ENCODE measurements at regions of chr5 and their contacts with region 1.

Region 1: GRCh38 chr5:146965761-146966659 is 87.5 kb upstream of the PPP2R2B start:
- DNase-seq: peak; percentile 34 to 57 (median 51)
- H3K4me3 ChIP-seq: no peak overlapping the region
- H3K4me3 Mint-ChIP-seq: no peak overlapping the region
- H3K27ac ChIP-seq: no peak overlapping the region
- H3K27ac Mint-ChIP-seq: no peak overlapping the region
- H3K4me1 ChIP-seq: no peaks in the 10 kb centered on the region
- H3K4me1 Mint-ChIP-seq: no peaks in the 10 kb centered on the region
- H3K27me3 ChIP-seq: no peaks in the 10 kb centered on the region
- H3K27me3 Mint-ChIP-seq: peaks cover 0 to 2% (median 0%) of the 10 kb centered on the region in 3 donors
- CTCF ChIP-seq: peak; percentile 83

Region 2: DNA sequence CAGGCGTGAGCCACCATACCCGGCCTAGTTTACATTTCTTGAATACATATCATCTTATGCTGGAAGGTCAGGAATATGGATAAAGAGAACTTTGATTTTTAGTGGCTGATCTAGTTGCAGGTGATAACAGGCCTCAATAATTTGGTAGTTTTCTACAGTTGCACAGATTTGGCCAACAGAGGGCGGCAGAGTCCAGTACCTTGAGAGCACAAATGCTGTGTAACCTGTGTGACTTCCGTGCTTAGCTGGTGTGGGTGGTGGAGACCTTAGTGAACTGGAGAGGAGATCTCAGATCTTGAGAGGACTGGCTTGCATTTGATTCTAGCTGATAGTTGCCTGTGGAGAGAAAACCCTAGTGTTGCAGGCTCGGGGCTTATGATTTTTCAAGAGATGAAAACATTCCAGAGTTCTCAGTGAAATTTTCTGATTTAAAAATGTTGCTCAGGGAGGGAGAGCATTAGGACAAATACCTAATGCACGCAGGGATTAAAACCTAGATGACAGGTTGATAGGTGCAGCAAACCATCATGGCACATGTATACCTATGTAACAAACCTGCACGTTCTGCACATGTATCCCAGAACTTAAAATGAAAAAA is 432.7 kb before region 1 on chr5:
- intact Hi-C with region 1: loop called in 1 of 2 experiments (anchors 5 kb)
- DNase-seq: peak; percentile 15 to 42 (median 32)
- H3K4me3 ChIP-seq: no peak overlapping the region
- H3K4me3 Mint-ChIP-seq: no peak overlapping the region
- H3K27ac ChIP-seq: no peak overlapping the region
- H3K27ac Mint-ChIP-seq: no peak overlapping the region
- H3K4me1 ChIP-seq: no peaks in the 10 kb centered on the region
- H3K4me1 Mint-ChIP-seq: peaks cover 2% of the 10 kb centered on the region
- H3K27me3 ChIP-seq: no peaks in the 10 kb centered on the region
- H3K27me3 Mint-ChIP-seq: peaks cover 1 to 5% (median 2%) of the 10 kb centered on the region in 3 donors
- CTCF ChIP-seq: peak; percentile 70

Region 3: GRCh38 chr5:146548781-146549449 is 417.1 kb before region 1 on chr5:
- intact Hi-C with region 1: loop called in 1 of 2 experiments (anchors 5 kb)
- DNase-seq: no peak
- H3K4me3 ChIP-seq: no peak overlapping the region
- H3K4me3 Mint-ChIP-seq: no peak overlapping the region
- H3K27ac ChIP-seq: no peak overlapping the region
- H3K27ac Mint-ChIP-seq: no peak overlapping the region
- H3K4me1 ChIP-seq: no peaks in the 10 kb centered on the region
- H3K4me1 Mint-ChIP-seq: no peaks in the 10 kb centered on the region
- H3K27me3 ChIP-seq: no peaks in the 10 kb centered on the region
- H3K27me3 Mint-ChIP-seq: peaks cover 4 to 11% (median 6%) of the 10 kb centered on the region in 3 donors
- CTCF ChIP-seq: no peak

Region 4: DNA sequence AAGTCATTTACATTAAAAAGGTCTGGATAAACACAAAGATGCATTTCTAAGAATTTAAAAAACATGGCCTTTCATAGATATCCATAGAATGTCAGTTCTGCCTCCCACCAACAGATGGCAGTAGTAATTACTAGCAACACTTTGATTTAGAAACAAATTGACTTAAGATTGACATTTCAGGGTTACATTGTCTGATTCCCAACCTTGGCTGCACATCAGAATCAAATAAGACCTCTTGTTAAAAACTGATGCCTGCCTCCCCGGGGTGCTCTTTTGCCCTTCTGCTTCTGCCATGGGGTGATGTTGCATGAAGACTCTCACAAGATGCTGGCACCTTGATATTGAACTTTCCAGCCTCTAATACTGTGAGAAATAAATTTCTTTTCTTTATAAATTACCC is 303.8 kb before region 1 on chr5:
- intact Hi-C with region 1: loop called (anchors 5 kb)
- DNase-seq: peak in 2 of 3 donors; percentile 7 to 16
- H3K4me3 ChIP-seq: no peak overlapping the region
- H3K4me3 Mint-ChIP-seq: no peak overlapping the region
- H3K27ac ChIP-seq: no peak overlapping the region
- H3K27ac Mint-ChIP-seq: no peak overlapping the region
- H3K4me1 ChIP-seq: no peaks in the 10 kb centered on the region
- H3K4me1 Mint-ChIP-seq: no peaks in the 10 kb centered on the region
- H3K27me3 ChIP-seq: no peaks in the 10 kb centered on the region
- H3K27me3 Mint-ChIP-seq: no peaks in the 10 kb centered on the region
- CTCF ChIP-seq: peak; percentile 74